ENCODE measurements at regions of chr16 and their contacts with region 1.

Region 1: DNA sequence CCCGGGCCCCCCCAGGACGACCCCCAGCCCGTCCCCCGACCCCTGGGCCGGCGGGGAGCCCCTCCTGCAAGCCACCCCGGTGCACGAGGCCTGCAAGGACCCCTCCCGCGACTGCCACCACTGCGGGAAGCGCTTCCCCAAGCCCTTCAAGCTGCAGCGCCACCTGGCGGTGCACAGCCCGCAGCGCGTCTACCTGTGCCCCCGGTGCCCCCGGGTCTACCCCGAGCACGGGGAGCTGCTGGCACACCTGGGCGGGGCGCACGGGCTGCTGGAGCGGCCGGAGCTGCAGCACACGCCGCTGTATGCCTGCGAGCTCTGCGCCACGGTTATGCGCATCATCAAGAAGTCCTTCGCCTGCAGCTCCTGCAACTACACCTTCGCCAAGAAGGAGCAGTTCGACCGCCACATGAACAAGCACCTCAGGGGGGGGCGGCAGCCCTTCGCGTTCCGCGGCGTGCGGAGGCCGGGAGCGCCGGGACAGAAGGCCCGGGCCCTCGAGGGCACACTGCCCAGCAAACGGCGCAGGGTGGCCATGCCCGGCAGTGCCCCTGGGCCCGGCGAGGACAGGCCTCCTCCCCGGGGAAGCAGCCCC is 15.6 kb upstream of the ZFPM1 start:
- DNase-seq: no peak
- H3K4me3 ChIP-seq: no peak overlapping the region
- CTCF ChIP-seq: peak; percentile 94

Region 2: GRCh38 chr16:87982491-87983415 is 454.7 kb before region 1 on chr16:
- CTCF ChIA-PET with region 1: interaction called, 12 read pairs
- POLR2A ChIA-PET with region 1: no interaction called
- DNase-seq: no peak
- H3K4me3 ChIP-seq: no peak overlapping the region
- CTCF ChIP-seq: no peak

Region 3: DNA sequence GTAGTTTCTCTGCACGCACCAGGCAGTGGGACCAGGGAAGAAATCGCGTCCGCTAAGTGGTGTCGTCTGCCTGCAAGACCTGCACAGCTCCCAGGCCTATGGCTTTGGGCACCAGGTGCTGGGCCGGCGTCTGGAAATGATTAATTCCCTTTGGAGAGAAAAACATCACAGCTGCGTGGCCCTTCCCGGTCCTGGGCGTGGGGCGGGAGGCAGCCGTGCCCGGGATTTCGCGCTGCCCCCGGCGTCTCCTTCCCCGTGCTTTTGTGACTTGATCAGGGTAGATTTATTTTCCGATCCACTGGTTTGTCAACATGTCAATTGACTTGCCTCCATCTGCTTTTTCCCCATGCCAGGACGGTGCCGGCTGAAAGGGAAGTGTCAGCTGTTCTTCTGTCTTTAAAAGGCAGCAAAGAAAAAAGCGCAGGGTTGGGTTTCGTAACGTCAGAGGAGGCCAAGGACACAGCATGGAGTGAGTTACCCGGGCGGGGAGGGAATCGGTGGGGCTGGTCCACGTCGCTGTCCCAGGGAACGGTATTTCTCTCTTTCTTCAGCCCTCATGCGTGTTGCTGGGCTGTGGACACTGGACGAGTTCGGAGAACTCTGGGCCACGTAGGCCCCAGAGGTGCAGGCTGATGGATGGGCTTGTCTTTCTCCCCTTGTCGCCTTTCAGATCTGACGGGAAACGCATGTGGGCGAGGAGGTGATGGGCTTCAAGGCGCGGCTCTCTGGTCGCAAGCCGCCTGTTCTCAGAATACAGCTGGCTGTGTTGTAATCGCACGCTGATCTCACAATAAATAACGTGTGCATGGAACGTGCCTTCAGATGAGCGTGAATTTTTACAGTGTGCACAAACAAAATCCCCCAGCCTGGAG is 242.8 kb before region 1 on chr16:
- CTCF ChIA-PET with region 1: interaction called, 12 read pairs
- POLR2A ChIA-PET with region 1: no interaction called
- DNase-seq: no peak
- H3K4me3 ChIP-seq: no peak overlapping the region
- CTCF ChIP-seq: no peak

Region 4: DNA sequence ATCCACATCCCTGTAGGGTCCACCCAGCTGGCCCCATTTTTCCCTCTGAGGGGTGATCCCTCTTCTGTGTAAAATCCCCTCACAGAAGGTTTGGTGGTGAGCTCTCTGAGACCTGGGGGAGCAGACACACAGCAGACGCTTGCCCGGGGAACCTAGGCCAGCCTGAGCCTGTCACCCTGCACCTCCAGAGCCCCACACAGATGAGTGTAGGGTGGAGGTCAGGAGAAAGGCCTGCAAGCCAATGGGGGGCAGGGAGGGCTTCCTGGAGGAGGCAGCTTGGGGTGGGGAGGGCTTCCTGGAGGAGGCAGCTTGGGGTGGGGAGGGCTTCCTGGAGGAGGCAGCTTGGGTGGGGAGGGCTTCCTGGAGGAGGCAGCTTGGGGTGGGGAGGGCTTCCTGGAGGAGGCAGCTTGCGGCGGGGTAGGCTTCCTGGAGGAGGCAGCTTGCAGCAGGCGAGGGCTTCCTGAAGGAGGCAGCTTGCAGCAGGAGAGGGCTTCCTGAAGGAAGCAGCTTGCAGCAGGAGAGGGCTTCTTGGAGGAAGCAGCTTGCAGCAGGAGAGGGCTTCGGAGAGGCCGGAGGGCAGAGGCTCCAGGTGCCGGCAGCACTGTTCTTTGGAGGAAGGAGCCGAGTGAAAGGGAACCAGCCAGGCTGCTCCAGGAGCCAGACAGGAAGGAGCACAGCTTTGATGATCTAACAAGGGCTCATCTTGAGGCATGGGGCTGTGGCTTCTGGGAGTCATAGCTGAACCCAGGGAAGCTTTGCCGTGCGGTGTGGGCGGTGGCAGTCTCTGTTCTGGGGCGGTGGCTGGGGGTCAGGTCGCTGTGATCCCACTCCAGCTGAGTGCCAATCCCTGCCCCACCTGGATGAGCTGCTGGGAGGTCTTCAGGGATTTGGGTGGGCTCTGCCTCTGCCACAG is 138.4 kb before region 1 on chr16:
- CTCF ChIA-PET with region 1: no interaction called
- POLR2A ChIA-PET with region 1: no interaction called
- DNase-seq: no peak
- H3K4me3 ChIP-seq: no peak overlapping the region
- CTCF ChIP-seq: no peak

Region 5: GRCh38 chr16:88448461-88449266 is 11.2 kb after region 1 on chr16:
- CTCF ChIA-PET with region 1: interaction called, 13 read pairs
- POLR2A ChIA-PET with region 1: no interaction called
- DNase-seq: no peak
- H3K4me3 ChIP-seq: no peak overlapping the region
- CTCF ChIP-seq: no peak

Measured in AG04449 (cell line).